HepG2 (cell line): ENCODE measurements at regions of chr14 and their contacts with region 1.

Region 1: GRCh38 chr14:89416002-89416995 is 734 bp downstream of the FOXN3 start:
- DNase-seq: peak; percentile 96
- ATAC-seq: peak; percentile 87
- H3K4me3 ChIP-seq: peak overlapping the region; percentile 74 to 93 (median 87)
- H3K27ac ChIP-seq: peak overlapping the region; percentile 84
- H3K4me1 ChIP-seq: peaks cover 80% of the 10 kb centered on the region
- H3K27me3 ChIP-seq: no peaks in the 10 kb centered on the region
- CTCF ChIP-seq: no peak
- EP300 ChIP-seq: peak in 1 of 2 experiments; percentile 21; a peak in 1 of 4 replicates
- POLR2A ChIP-seq: peak; percentile 31 to 66
- RAD21 ChIP-seq: no peak

Region 2: GRCh38 chr14:89040460-89041259 is 375.6 kb before region 1 on chr14:
- CTCF ChIA-PET with region 1: interaction called, 3 read pairs
- POLR2A ChIA-PET with region 1: interaction called, 8 read pairs
- in situ Hi-C with region 1: loop called (anchors 5 kb)
- intact Hi-C with region 1: loop called (anchors 1 kb)
- DNase-seq: peak; percentile 93
- ATAC-seq: peak; percentile 96
- H3K4me3 ChIP-seq: peak overlapping the region; percentile 51 to 76 (median 54)
- H3K27ac ChIP-seq: peak overlapping the region; percentile 100
- H3K4me1 ChIP-seq: peaks cover 28% of the 10 kb centered on the region
- H3K27me3 ChIP-seq: no peaks in the 10 kb centered on the region
- CTCF ChIP-seq: peak; percentile 96
- EP300 ChIP-seq: peak; percentile 86 to 87; a peak in 3 of 4 replicates
- POLR2A ChIP-seq: peak; percentile 58 to 94
- RAD21 ChIP-seq: peak; percentile 89

Region 3: GRCh38 chr14:89336338-89336737 is 80.0 kb before region 1 on chr14:
- CTCF ChIA-PET with region 1: interaction called, 3 read pairs
- POLR2A ChIA-PET with region 1: interaction called, 9 read pairs
- in situ Hi-C with region 1: no loop called
- intact Hi-C with region 1: loop called (anchors 5 kb)
- DNase-seq: peak; percentile 27
- ATAC-seq: peak; percentile 21
- H3K4me3 ChIP-seq: no peak overlapping the region
- H3K27ac ChIP-seq: no peak overlapping the region
- H3K4me1 ChIP-seq: peaks cover 72% of the 10 kb centered on the region
- H3K27me3 ChIP-seq: no peaks in the 10 kb centered on the region
- CTCF ChIP-seq: peak; percentile 25; the same call in 1 of the 2 replicates
- EP300 ChIP-seq: no peak
- POLR2A ChIP-seq: no peak
- RAD21 ChIP-seq: no peak

Region 4: GRCh38 chr14:89365061-89365801 is 51.1 kb before region 1 on chr14:
- CTCF ChIA-PET with region 1: no interaction called
- POLR2A ChIA-PET with region 1: interaction called, 19 read pairs
- in situ Hi-C with region 1: no loop called
- intact Hi-C with region 1: loop called (anchors 5 kb)
- DNase-seq: no peak
- ATAC-seq: no peak
- H3K4me3 ChIP-seq: no peak overlapping the region
- H3K27ac ChIP-seq: no peak overlapping the region
- H3K4me1 ChIP-seq: peaks cover 66% of the 10 kb centered on the region
- H3K27me3 ChIP-seq: no peaks in the 10 kb centered on the region
- CTCF ChIP-seq: no peak
- EP300 ChIP-seq: no peak
- POLR2A ChIP-seq: no peak
- RAD21 ChIP-seq: no peak

Region 5: DNA sequence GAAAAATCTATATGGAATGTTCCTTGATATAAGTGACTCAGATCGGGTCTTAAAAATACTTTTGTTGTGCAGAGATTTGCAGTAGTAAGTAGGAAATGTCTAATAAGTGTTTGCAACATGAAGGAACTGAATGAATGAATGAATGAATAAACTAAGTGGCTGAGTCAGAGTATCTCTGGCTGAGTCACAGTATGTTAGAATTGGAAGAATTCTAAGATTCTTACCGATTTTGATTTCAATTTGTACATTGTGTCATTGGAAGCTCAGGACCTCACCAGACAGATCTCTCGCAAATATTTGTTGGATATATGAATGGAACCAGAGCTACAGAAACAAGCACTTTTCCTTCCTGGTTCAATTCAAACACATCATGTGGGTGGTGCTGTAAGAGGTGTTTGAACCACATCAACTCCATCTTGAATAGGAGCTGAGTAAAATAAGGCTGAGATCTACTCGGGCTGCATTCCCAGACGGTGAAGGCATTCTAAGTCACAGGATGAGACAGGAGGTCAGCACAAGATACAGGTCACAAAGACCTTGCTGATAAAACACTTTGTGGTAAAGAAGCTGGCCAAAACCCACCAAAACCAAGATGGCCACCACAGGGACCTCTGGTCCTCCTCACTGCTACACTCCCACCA is 124.7 kb after region 1 on chr14:
- CTCF ChIA-PET with region 1: no interaction called
- POLR2A ChIA-PET with region 1: no interaction called
- in situ Hi-C with region 1: no loop called
- intact Hi-C with region 1: loop called (anchors 2 kb)
- DNase-seq: no peak
- ATAC-seq: no peak
- H3K4me3 ChIP-seq: no peak overlapping the region
- H3K27ac ChIP-seq: peak overlapping the region; percentile 45
- H3K4me1 ChIP-seq: peaks cover 65% of the 10 kb centered on the region
- H3K27me3 ChIP-seq: no peaks in the 10 kb centered on the region
- CTCF ChIP-seq: no peak
- EP300 ChIP-seq: no peak
- POLR2A ChIP-seq: no peak
- RAD21 ChIP-seq: no peak

Region 6: GRCh38 chr14:89773644-89774316 is 357.5 kb after region 1 on chr14:
- CTCF ChIA-PET with region 1: no interaction called
- POLR2A ChIA-PET with region 1: no interaction called
- in situ Hi-C with region 1: no loop called
- intact Hi-C with region 1: loop called (anchors 10 kb)
- DNase-seq: peak; percentile 61
- ATAC-seq: peak; percentile 99
- H3K4me3 ChIP-seq: peak overlapping the region; percentile 51 to 71 (median 56); a peak in 5 of 6 replicates
- H3K27ac ChIP-seq: peak overlapping the region; percentile 57
- H3K4me1 ChIP-seq: peaks cover 46% of the 10 kb centered on the region
- H3K27me3 ChIP-seq: no peaks in the 10 kb centered on the region
- CTCF ChIP-seq: no peak
- EP300 ChIP-seq: 0 out of 4 replicates have a peak, but pooled peaks of 1 of the 2 experiments have one; percentile 23
- POLR2A ChIP-seq: peak in 1 of 2 experiments; percentile 50; a peak in 2 of 4 replicates
- RAD21 ChIP-seq: no peak